Cardiac septum (tissue), 1 donor: ENCODE measurements at regions of chr4 and their contacts with region 1.

Region 1: GRCh38 chr4:186137196-186137794 is 32.8 kb downstream of the FAM149A start:
- DNase-seq: no peak

Region 2: GRCh38 chr4:186067757-186068385 is 69.4 kb before region 1 on chr4:
- intact Hi-C with region 1: loop called (anchors 5 kb)
- DNase-seq: no peak

Region 3: DNA sequence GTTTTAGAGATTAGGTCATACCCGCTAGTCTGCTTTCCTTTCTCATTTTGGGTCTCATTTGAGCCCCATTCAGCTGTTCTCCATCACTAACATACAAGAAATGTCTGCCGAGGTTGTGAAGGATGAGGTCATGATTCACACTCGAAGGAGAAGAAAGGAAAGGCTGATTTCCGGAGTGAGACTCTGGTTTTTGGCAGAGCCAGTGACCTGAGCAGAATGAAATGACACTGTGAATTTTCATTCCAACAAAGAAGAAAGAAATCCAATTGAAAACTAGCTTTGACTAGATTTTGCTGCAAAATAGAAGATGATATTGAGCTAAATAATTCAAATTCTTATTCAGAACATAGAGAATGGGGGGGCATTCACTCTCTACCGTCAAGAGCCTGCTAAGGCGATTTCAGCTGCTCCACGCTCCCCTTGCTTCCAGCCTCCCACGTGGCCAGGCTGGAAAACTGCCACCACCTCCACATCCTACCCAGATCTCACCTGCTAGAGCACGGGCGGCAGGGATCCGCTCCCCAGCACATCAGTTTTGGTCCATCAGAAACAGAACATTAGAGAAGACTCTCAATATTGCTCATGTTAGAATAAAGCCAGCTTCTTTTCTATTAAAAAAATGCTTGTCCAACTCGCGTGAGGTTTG is 167.7 kb after region 1 on chr4:
- intact Hi-C with region 1: no loop called
- DNase-seq: no peak